ENCODE measurements at regions of chr3 and their contacts with region 1.

Region 1: DNA sequence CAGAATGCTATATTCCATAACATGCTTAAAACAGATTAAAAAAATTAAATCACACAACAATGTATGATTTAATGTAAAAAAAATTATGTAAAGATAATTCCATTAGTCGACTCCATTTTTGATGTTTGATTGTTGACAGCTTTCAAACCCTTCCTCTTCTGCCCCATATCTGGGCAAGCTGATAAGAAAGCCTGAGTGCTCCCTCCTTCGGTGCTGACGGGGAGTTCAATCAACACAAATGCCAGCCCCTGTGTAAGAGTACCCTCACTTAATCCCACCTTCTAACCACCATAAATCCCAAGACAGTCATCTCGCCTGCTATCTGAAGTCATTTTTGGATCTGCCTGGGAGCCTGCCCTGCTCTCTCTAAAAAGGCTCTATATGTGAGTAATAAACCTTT is 59.8 kb upstream of the IP6K2 start:
- DNase-seq: no peak
- ATAC-seq: no peak
- H3K4me3 ChIP-seq: no peak overlapping the region
- H3K27ac ChIP-seq: no peak overlapping the region
- H3K4me1 ChIP-seq: no peaks in the 10 kb centered on the region
- H3K27me3 ChIP-seq: no peaks in the 10 kb centered on the region
- CTCF ChIP-seq: no peak

Region 2: GRCh38 chr3:48679411-48680391 is 97.2 kb before region 1 on chr3:
- CTCF ChIA-PET with region 1: no interaction called
- POLR2A ChIA-PET with region 1: no interaction called
- in situ Hi-C with region 1: no loop called
- intact Hi-C with region 1: no loop called
- DNase-seq: no peak
- ATAC-seq: no peak
- H3K4me3 ChIP-seq: no peak overlapping the region
- H3K27ac ChIP-seq: no peak overlapping the region
- H3K4me1 ChIP-seq: peaks cover 7% of the 10 kb centered on the region; the same call in 1 of the 2 replicates
- H3K27me3 ChIP-seq: no peaks in the 10 kb centered on the region
- CTCF ChIP-seq: no peak

Region 3: DNA sequence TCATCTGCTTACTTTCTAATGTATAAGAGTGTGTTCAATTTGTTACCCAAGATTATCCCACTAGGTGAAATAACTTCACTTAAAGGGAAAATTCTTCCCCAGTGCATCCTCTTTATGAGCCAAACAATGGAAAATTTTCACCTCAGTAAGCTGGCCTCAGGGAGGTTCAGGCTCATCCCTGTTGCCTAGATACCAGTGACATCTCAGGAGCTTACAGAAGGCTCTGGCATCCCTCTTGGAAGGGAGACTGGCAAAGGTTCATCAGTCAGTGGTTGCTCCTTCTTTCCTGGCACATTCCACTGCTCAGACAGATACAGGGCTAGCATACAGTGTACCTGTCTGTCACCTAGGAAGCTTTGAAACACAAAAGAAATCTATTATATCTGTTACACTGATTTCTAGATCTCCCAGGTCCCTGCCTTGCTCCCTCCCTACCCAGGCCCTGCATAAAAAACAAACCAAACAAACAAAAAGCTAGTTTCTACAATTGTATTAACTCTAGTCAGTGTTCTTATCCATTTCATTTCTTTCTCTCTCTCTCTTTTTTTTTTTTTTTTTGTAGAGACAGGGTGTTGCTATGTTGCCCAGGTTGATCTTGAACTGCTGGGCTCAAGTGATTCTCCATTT is 61.6 kb before region 1 on chr3:
- CTCF ChIA-PET with region 1: no interaction called
- POLR2A ChIA-PET with region 1: interaction called, 11 read pairs
- in situ Hi-C with region 1: no loop called
- intact Hi-C with region 1: no loop called
- DNase-seq: no peak
- ATAC-seq: no peak
- H3K4me3 ChIP-seq: peak overlapping the region; percentile 99
- H3K27ac ChIP-seq: peak overlapping the region; percentile 44; the same call in 1 of the 2 replicates
- H3K4me1 ChIP-seq: peaks cover 18% of the 10 kb centered on the region
- H3K27me3 ChIP-seq: no peaks in the 10 kb centered on the region
- CTCF ChIP-seq: no peak